ENCODE measurements at regions of chr10 and their contacts with region 1.

Region 1: GRCh38 chr10:55174419-55174818 is 373.4 kb upstream of the PCDH15 start:
- DNase-seq: peak; percentile 48 to 60
- H3K4me3 ChIP-seq: no peak overlapping the region
- H3K4me3 Mint-ChIP-seq: no peak overlapping the region
- H3K27ac Mint-ChIP-seq: no peak overlapping the region
- H3K4me1 ChIP-seq: no peaks in the 10 kb centered on the region
- H3K4me1 Mint-ChIP-seq: no peaks in the 10 kb centered on the region
- H3K27me3 ChIP-seq: no peaks in the 10 kb centered on the region
- H3K27me3 Mint-ChIP-seq: no peaks in the 10 kb centered on the region
- CTCF ChIP-seq: peak; percentile 63 to 76

Region 2: GRCh38 chr10:55144001-55144400 is 30.4 kb before region 1 on chr10:
- CTCF ChIA-PET with region 1: interaction called, 13 read pairs
- POLR2A ChIA-PET with region 1: no interaction called
- intact Hi-C with region 1: no loop called
- DNase-seq: no peak
- H3K4me3 ChIP-seq: no peak overlapping the region
- H3K4me3 Mint-ChIP-seq: no peak overlapping the region
- H3K27ac Mint-ChIP-seq: no peak overlapping the region
- H3K4me1 ChIP-seq: no peaks in the 10 kb centered on the region
- H3K4me1 Mint-ChIP-seq: no peaks in the 10 kb centered on the region
- H3K27me3 ChIP-seq: no peaks in the 10 kb centered on the region
- H3K27me3 Mint-ChIP-seq: no peaks in the 10 kb centered on the region
- CTCF ChIP-seq: no peak

Region 3: GRCh38 chr10:55163388-55163979 is 10.9 kb before region 1 on chr10:
- CTCF ChIA-PET with region 1: no interaction called
- POLR2A ChIA-PET with region 1: no interaction called
- intact Hi-C with region 1: no loop called
- DNase-seq: no peak
- H3K4me3 ChIP-seq: no peak overlapping the region
- H3K4me3 Mint-ChIP-seq: no peak overlapping the region
- H3K27ac Mint-ChIP-seq: no peak overlapping the region
- H3K4me1 ChIP-seq: no peaks in the 10 kb centered on the region
- H3K4me1 Mint-ChIP-seq: no peaks in the 10 kb centered on the region
- H3K27me3 ChIP-seq: no peaks in the 10 kb centered on the region
- H3K27me3 Mint-ChIP-seq: peaks cover under 1% of the 10 kb centered on the region
- CTCF ChIP-seq: no peak